Esophagus muscularis mucosa (tissue), 4 donors: ENCODE measurements at regions of chrX and their contacts with region 1.

Region 1: DNA sequence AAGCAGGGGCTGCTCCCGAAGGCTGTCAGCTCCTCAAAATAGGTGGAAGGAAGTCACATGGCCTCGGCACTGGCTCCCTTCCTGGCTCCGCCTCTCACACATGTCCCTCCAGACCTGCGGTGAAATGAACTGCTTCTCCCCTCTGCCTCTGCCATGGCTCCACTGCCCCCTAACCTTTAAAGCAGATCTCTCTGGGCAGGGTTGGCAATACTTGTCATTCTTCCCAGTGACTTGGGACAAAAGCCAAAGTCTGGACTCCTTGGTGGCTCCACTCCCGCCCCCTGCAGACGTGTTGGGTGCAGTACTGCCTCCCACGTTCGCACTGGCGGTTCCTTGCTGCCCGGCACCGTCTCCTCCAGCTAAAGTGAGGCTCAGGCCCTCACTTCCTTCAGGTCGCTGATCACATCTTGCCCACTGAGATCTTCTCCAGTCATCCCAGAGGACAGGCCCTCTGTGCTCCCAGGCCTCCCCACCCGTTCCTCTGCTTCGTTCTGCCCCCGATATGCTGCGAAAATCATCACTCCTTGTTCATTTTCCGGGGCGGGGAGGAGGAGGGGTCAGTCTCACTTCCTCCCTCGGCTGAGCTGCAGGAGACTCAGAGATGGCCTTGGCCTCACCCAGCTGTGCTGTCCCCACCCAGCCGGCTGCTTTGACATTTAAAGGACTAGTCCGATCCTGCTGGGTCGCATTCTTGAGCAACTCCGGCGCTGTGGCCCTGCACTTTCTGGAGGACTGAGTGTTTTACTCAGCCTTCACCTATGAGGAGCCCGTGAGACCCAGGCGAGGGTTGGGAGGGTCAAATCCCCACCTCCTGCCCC is 97.4 kb downstream of the PHKA2 start:
- DNase-seq: peak; percentile 92
- H3K4me3 ChIP-seq: peak overlapping the region; percentile 44 to 52 (median 46)
- H3K27ac ChIP-seq: peak overlapping the region; percentile 75 to 80 (median 77)
- H3K4me1 ChIP-seq: peaks cover 11 to 27% (median 25%) of the 10 kb centered on the region in 4 donors
- H3K27me3 ChIP-seq: no peaks in the 10 kb centered on the region
- CTCF ChIP-seq: peak; percentile 42 to 63 (median 60)
- EP300 ChIP-seq: no peak
- POLR2A ChIP-seq: no peak

Region 2: GRCh38 chrX:18674788-18675735 is 211.5 kb before region 1 on chrX:
- intact Hi-C with region 1: loop called (anchors 5 kb)
- DNase-seq: peak; percentile 92
- H3K4me3 ChIP-seq: peak overlapping the region; percentile 67 to 71 (median 68)
- H3K27ac ChIP-seq: peak overlapping the region; percentile 77 to 88 (median 84)
- H3K4me1 ChIP-seq: peaks cover 0 to 4% (median 0%) of the 10 kb centered on the region in 4 donors
- H3K27me3 ChIP-seq: peaks cover 0 to 3% (median 0%) of the 10 kb centered on the region in 4 donors
- CTCF ChIP-seq: no peak
- EP300 ChIP-seq: no peak
- POLR2A ChIP-seq: no peak

Region 3: GRCh38 chrX:18946157-18946556 is 59.6 kb after region 1 on chrX:
- intact Hi-C with region 1: no loop called
- DNase-seq: no peak
- H3K4me3 ChIP-seq: no peak overlapping the region
- H3K27ac ChIP-seq: no peak overlapping the region
- H3K4me1 ChIP-seq: no peaks in the 10 kb centered on the region
- H3K27me3 ChIP-seq: no peaks in the 10 kb centered on the region
- CTCF ChIP-seq: no peak
- EP300 ChIP-seq: no peak
- POLR2A ChIP-seq: no peak

Region 4: GRCh38 chrX:19280636-19281035 is 394.1 kb after region 1 on chrX:
- intact Hi-C with region 1: no loop called
- DNase-seq: no peak
- H3K4me3 ChIP-seq: no peak overlapping the region
- H3K27ac ChIP-seq: no peak overlapping the region
- H3K4me1 ChIP-seq: no peaks in the 10 kb centered on the region
- H3K27me3 ChIP-seq: no peaks in the 10 kb centered on the region
- CTCF ChIP-seq: no peak
- EP300 ChIP-seq: no peak
- POLR2A ChIP-seq: no peak

Region 5: GRCh38 chrX:19554786-19555185 is 668.2 kb after region 1 on chrX:
- intact Hi-C with region 1: no loop called
- DNase-seq: no peak
- H3K4me3 ChIP-seq: no peak overlapping the region
- H3K27ac ChIP-seq: no peak overlapping the region
- H3K4me1 ChIP-seq: no peaks in the 10 kb centered on the region
- H3K27me3 ChIP-seq: peaks cover 0 to 3% (median 0%) of the 10 kb centered on the region in 4 donors
- CTCF ChIP-seq: no peak
- EP300 ChIP-seq: no peak
- POLR2A ChIP-seq: no peak